ENCODE measurements at regions of chr2 and their contacts with region 1.

Region 1: DNA sequence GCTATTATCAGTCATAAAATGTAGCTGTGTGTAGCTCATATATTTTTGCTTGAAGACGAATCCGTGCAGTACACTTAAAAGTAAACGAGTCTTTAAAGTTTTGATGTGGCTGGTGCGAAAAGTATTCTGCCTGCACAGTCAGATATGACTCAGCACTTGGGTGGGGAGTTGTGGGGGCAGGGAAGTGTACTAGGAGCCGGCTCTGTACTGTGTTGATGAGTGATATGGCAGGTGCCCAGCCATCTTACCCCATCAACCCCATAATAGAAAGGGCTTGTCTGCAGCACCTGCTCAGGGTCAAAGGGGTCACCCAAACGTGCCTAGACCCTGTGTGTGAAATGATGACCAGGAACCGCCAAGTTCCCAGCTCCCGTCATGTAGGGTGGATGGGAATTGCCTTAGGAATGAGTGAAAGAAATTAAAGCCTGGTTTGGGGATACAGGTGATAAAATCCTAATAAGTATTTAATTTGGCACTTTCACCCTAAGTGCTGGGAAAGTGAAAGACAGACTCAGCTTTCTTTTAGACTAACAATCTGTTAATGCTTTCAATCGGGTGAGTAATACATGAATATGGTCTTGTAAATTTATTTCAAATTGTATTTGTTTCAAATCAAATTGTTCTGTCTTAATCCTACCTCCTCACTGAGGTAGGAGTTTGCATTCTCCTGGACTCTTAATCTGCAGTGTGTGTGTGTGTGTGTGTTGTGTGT is 48.0 kb downstream of the BCL2L11 start:
- DNase-seq: peak in 3 of 5 donors; percentile 18 to 61 (median 58)
- ATAC-seq: peak; percentile 79 to 88 (median 83)
- H3K4me3 ChIP-seq: no peak overlapping the region
- H3K27ac ChIP-seq: no peak overlapping the region
- H3K4me1 ChIP-seq: peaks cover 0 to 23% (median 12%) of the 10 kb centered on the region in 12 donors
- H3K27me3 ChIP-seq: no peaks in the 10 kb centered on the region
- CTCF ChIP-seq: no peak
- POLR2A ChIP-seq: no peak

Region 2: DNA sequence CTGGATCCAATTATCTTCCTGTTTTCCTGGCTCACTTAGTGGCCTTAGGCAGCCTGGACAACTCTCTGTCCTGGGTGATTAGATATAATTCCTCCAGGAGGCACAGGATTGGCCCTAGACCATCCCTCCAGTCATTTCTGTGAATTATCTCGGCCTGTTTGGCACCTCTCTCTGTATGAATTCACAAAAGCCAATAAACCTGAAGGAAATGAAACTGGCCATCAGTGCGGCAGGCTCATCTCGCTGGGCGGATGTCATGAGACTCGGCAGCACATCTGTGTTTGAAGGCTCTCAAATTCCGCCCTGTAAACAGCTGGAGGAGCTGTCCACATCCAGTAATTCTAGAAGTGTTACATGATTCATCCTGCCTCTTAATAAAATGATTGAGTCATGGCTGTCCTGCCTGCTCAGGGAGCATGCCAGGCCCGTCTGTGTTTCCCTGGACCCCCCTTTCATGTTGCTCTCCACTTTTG is 397.7 kb before region 1 on chr2:
- intact Hi-C with region 1: no loop called
- DNase-seq: peak in 3 of 5 donors; percentile 16 to 53 (median 37)
- ATAC-seq: peak in 2 of 4 donors; percentile 34 to 64
- H3K4me3 ChIP-seq: peak overlapping the region in 8 of 12 donors; percentile 10 to 34 (median 21)
- H3K27ac ChIP-seq: peak overlapping the region in 7 of 12 donors; percentile 13 to 41 (median 22)
- H3K4me1 ChIP-seq: peaks cover 0 to 43% (median 26%) of the 10 kb centered on the region in 12 donors
- H3K27me3 ChIP-seq: no peaks in the 10 kb centered on the region
- CTCF ChIP-seq: no peak
- POLR2A ChIP-seq: no peak

Region 3: GRCh38 chr2:111135910-111136297 is 32.8 kb before region 1 on chr2:
- intact Hi-C with region 1: loop called in 1 of 10 experiments (anchors 5 kb)
- DNase-seq: peak in 4 of 5 donors; percentile 25 to 52 (median 41)
- ATAC-seq: peak; percentile 57 to 86 (median 78)
- H3K4me3 ChIP-seq: no peak overlapping the region
- H3K27ac ChIP-seq: no peak overlapping the region
- H3K4me1 ChIP-seq: peaks cover 0 to 47% (median 27%) of the 10 kb centered on the region in 12 donors
- H3K27me3 ChIP-seq: no peaks in the 10 kb centered on the region
- CTCF ChIP-seq: peak in 9 of 12 donors; percentile 24 to 41 (median 30)
- POLR2A ChIP-seq: no peak

Region 4: GRCh38 chr2:111239107-111239506 is 70.4 kb after region 1 on chr2:
- intact Hi-C with region 1: loop called in 1 of 10 experiments (anchors 10 kb)
- DNase-seq: no peak
- ATAC-seq: no peak
- H3K4me3 ChIP-seq: no peak overlapping the region
- H3K27ac ChIP-seq: peak overlapping the region in 1 of 12 donors; percentile 51
- H3K4me1 ChIP-seq: peaks cover 0 to 20% (median 2%) of the 10 kb centered on the region in 12 donors
- H3K27me3 ChIP-seq: no peaks in the 10 kb centered on the region
- CTCF ChIP-seq: no peak
- POLR2A ChIP-seq: no peak